ENCODE measurements at regions of chr6 and their contacts with region 1.

Region 1: GRCh38 chr6:13574149-13574570 is 241 bp upstream of the SIRT5 start:
- DNase-seq: peak; percentile 90 to 92
- ATAC-seq: peak; percentile 88 to 93
- H3K4me3 ChIP-seq: peak overlapping the region; percentile 76 to 98 (median 84)
- H3K27ac ChIP-seq: peak overlapping the region; percentile 93 to 99 (median 98)
- H3K4me1 ChIP-seq: peaks cover 15 to 17% of the 10 kb centered on the region in 2 donors
- H3K27me3 ChIP-seq: no peaks in the 10 kb centered on the region
- CTCF ChIP-seq: peak; percentile 50 to 69 (median 64)
- POLR2A ChIP-seq: no peak

Region 2: DNA sequence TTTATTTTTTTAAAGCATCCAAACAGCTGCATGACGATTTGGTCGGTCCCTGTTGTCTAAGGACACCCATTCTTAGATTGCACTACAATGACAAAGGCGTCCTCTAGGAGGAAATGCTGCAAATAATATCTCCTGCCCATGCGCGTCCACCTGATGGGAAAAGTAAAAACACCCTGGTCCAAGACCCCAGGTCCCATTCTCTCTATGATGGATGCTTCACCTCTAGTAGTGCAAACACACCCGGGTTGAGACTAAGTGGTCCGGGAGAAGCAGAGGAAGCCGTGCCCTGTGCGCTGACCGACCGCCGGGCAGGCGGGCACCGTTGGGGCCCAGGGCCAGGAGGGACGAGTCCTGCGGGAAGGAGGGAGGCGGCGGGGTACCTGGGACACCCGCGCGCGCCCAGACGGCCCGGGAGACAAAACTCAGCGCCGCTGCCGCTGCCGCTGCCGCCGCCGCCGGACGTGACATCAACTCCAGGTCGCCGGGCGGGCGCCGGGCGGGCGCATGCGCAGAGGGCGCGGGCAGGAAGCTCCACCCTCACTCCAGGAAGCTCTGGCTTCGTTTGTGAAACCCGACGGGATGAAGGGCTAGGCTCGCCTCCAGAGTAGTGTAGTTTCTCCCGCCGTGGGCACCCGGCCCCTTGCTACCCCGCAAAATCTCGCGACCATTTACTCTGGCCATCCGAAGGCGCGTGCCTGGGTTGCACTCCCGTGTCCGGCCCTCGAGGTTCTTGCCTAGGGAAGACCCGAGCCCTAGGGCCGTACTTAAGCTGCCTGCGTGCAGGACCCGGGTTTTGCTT is 245.9 kb before region 1 on chr6 and contains the start of gene TBC1D7:
- in situ Hi-C with region 1: no loop called
- intact Hi-C with region 1: loop called (anchors 2 kb)
- DNase-seq: peak; percentile 83 to 91
- ATAC-seq: peak; percentile 98 to 99
- H3K4me3 ChIP-seq: peak within 1 kb of the TSS; percentile 89 to 98 (median 94)
- H3K27ac ChIP-seq: peak within 1 kb of the TSS; percentile 90 to 97 (median 96)
- H3K4me1 ChIP-seq: peaks cover 13 to 19% of the 10 kb centered on the region in 2 donors
- H3K27me3 ChIP-seq: no peaks in the 10 kb centered on the region
- CTCF ChIP-seq: peak in 2 of 5 experiments; percentile 9 to 24
- POLR2A ChIP-seq: peak; percentile 83 to 84
- total RNA-seq, gene TBC1D7: 5.7 to 14.9 (median 6.6) TPM

Region 3: GRCh38 chr6:13413900-13414555 is 160.1 kb before region 1 on chr6:
- in situ Hi-C with region 1: no loop called
- intact Hi-C with region 1: loop called (anchors 5 kb)
- DNase-seq: peak; percentile 53 to 84
- ATAC-seq: peak; percentile 84 to 85
- H3K4me3 ChIP-seq: no peak overlapping the region
- H3K27ac ChIP-seq: peak overlapping the region; percentile 63 to 78 (median 70)
- H3K4me1 ChIP-seq: peaks cover 73% of the 10 kb centered on the region in 2 donors
- H3K27me3 ChIP-seq: no peaks in the 10 kb centered on the region
- CTCF ChIP-seq: peak in 3 of 5 experiments; percentile 19 to 32 (median 25)
- POLR2A ChIP-seq: no peak

Region 4: DNA sequence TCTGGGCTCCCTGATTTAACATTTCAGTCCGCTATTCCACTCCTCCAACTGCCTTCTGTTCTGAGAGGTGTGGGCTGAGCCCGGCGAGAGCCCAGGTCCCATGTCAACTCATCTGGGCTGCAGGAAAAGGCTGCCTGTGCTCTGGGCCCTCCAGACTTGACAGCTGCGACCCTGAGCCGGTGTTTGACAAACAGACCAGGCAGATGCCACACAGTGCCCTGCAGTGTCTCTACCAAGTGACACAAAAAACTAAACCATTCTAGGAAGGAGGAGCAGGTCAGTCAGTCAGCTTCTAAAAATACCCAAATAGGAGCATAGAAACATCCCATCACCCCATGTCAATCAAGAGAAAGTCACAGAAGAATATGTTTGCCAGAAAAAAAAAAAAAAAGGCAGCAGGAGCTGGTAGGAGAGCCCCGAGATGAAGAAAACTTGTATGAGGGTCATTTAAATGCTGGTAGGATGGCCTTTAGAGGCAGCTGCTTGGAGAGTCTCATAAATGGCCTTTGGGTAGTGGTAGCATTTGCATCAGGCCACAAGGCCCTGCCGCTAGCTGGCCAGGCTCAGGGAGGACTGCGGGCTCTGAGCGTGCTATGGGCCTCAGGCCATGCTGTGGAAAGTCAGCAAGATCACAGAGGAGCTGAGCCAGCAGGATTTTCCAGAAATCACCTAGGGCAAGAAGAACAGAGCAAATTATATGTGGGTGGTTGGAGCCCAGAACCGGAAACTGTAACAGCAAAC is 50.2 kb before region 1 on chr6:
- in situ Hi-C with region 1: no loop called
- intact Hi-C with region 1: loop called (anchors 2 kb)
- DNase-seq: peak; percentile 41 to 58
- ATAC-seq: peak; percentile 76 to 84
- H3K4me3 ChIP-seq: peak overlapping the region in 1 of 4 donors; percentile 19
- H3K27ac ChIP-seq: peak overlapping the region; percentile 80 to 100 (median 88)
- H3K4me1 ChIP-seq: peaks cover 47 to 52% of the 10 kb centered on the region in 2 donors
- H3K27me3 ChIP-seq: no peaks in the 10 kb centered on the region
- CTCF ChIP-seq: no peak
- POLR2A ChIP-seq: peak in 1 of 2 donors; percentile 49

Region 5: GRCh38 chr6:13614926-13615798 is 41.0 kb after region 1 on chr6 and contains the start of gene NOL7:
- in situ Hi-C with region 1: no loop called
- intact Hi-C with region 1: loop called (anchors 1 kb)
- DNase-seq: peak; percentile 97 to 98
- ATAC-seq: peak; percentile 95 to 97
- H3K4me3 ChIP-seq: peak within 1 kb of the TSS; percentile 68 to 95 (median 78)
- H3K27ac ChIP-seq: peak within 1 kb of the TSS; percentile 84 to 91 (median 88)
- H3K4me1 ChIP-seq: peaks cover 21 to 34% of the 10 kb centered on the region in 2 donors
- H3K27me3 ChIP-seq: no peaks in the 10 kb centered on the region
- CTCF ChIP-seq: peak; percentile 88 to 93 (median 92)
- POLR2A ChIP-seq: peak; percentile 67 to 73
- total RNA-seq, gene NOL7: 44.9 to 69.0 (median 63.8) TPM

Region 6: DNA sequence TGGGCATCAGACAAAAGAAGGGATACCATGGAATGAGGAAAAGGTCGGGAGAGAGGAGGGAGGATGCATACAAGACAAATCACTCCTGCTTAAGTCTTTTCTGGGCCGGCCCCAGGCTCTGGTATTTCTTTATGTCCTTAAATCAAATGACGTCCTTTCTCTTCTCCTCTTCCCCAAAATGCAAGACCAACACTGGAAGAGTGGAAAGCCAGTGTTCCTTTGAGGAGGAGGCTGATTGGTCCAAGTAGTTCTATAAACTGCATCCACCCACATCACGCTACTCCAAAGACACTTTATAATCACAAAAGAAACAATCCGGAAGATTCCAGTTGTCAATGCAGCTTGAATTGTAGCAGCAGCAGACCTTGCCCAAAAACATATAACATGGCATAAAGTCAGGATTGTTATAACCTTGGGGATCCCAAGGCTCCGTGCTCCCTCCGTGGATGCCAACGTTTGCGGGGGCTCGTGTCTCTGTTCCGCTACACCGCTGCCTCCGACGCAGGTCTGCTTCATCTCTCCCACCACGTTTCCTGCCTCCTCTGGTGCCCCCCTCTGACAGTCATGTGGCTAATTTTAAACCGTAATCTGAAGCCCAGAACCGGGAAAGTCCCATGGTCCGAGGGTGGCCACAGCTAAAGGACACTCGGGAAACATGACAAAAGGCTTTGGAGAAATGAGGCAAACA is 193.1 kb after region 1 on chr6:
- in situ Hi-C with region 1: no loop called
- intact Hi-C with region 1: loop called (anchors 1 kb)
- DNase-seq: peak; percentile 43 to 66
- ATAC-seq: peak; percentile 86 to 92
- H3K4me3 ChIP-seq: peak overlapping the region; percentile 20 to 39 (median 25)
- H3K27ac ChIP-seq: peak overlapping the region in 2 of 4 donors; percentile 8 to 60
- H3K4me1 ChIP-seq: peaks cover 3 to 7% of the 10 kb centered on the region in 2 donors
- H3K27me3 ChIP-seq: no peaks in the 10 kb centered on the region
- CTCF ChIP-seq: peak in 1 of 5 experiments; percentile 11
- POLR2A ChIP-seq: no peak

Measured in gastrocnemius medialis (tissue), 4 donors.